Right ventricle myocardium inferior (tissue), 1 donor: ENCODE measurements at regions of chr15 and their contacts with region 1.

Region 1: DNA sequence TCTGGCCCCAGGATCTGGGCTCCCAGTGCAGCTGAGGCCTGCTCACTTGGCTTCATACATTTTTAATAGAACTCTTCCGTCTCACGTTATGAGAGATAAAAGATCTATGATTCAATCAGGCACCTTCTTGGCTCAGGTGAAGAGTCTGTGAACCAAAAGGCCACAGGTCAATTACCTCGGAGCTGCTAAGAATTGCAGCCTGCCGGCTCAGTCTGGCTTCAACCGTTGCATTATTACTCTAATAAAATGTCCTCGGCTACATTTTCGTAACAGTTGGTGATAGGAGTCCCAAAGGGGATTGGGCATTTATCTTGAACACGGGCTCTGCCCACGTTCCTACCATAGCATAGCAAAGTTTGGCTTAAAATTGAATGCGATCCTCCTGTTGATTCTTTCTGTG is 176.3 kb downstream of the SLCO3A1 start:
- DNase-seq: no peak
- ATAC-seq: peak; percentile 32

Region 2: DNA sequence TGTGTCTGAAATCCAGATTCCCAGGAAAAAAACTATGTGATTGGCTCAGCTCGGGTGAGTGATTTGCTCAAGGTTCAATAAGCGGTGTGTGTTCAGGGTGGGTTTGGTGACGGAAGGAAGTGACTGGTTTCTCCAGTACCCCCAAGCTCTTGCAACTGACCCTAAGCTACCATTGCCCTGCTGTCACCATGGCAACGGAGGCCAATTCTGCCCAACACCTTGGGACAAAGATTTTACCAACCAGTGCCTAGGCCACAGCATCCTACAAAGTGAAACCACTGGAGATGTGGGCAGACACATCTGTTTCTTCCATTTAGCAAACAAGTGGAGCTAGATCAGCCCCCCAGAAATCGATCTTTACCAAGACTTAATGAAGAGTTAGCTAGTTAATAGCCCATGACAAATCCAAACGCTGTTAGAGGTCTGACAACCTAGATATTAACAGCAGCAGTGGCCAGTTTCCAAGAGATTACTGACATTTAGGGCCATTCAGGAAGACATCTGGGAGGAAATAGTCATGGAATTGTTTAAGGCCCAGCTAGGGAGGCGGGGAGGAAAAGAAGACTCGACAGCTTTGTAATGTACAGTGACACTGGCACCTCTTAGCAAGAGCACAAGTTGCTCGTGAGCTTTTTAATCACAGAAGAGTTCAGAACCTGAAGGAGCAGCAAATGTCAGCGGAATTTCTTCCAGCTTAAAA is 19.7 kb after region 1 on chr15:
- intact Hi-C with region 1: loop called (anchors 2 kb)
- DNase-seq: no peak
- ATAC-seq: no peak